Activated T-helper 1 cell treated with anti-CD3 and anti-CD28 coated beads, Interleukin-12 subunit alpha, Interleukin-12 subunit beta, Interleukin-2, Interleukin-4 antibody, amounts not matched to agents 30 ng/mL and 10 ng/mL and 1 ng/mL, durations not matched to agents 14 hours and 24 hours and 36 hours (primary cell): ENCODE measurements at regions of chr1 and their contacts with region 1.

Region 1: GRCh38 chr1:26771643-26772321 is 16.0 kb upstream of the PIGV start:
- DNase-seq: no peak
- H3K4me3 Mint-ChIP-seq: no peak overlapping the region
- H3K27ac Mint-ChIP-seq: peak overlapping the region; percentile 64
- H3K4me1 Mint-ChIP-seq: peaks cover 40% of the 10 kb centered on the region
- H3K27me3 Mint-ChIP-seq: no peaks in the 10 kb centered on the region

Region 2: DNA sequence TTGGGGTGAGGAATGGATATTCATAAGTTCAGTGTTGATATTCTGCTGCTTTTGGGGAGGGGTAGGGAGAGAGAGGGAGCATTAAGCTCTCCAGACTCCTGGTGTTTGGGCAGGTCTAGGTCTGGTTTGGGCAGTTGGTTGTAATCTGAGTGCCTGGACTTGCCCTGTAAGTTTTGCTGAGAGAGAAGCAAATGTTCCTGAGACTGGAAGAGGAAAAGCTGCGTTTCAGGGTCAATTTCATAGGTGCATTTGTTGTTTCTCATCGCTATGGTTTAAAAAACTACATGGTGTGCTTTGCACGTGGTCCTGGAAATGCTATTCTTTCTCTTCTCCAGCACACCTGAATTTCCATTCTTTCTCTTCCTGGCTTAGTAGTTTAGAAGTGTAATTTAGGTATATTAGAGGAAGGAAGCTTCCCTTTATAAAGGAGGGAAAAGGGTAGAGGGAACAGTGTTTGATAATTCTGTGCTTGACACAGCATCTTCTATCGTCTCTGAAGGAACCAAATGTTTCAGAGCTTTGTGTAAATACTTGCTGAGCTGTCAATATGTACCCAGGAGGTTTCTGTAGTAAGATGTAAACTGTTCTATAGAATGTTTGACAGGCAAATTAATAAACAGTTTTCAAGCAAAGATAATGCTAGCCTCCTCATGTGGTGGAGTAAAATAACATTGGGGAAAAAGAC is 69.6 kb before region 1 on chr1:
- intact Hi-C with region 1: loop called (anchors 2 kb)
- DNase-seq: no peak
- H3K4me3 Mint-ChIP-seq: no peak overlapping the region
- H3K27ac Mint-ChIP-seq: no peak overlapping the region
- H3K4me1 Mint-ChIP-seq: peaks cover 23% of the 10 kb centered on the region
- H3K27me3 Mint-ChIP-seq: no peaks in the 10 kb centered on the region

Region 3: DNA sequence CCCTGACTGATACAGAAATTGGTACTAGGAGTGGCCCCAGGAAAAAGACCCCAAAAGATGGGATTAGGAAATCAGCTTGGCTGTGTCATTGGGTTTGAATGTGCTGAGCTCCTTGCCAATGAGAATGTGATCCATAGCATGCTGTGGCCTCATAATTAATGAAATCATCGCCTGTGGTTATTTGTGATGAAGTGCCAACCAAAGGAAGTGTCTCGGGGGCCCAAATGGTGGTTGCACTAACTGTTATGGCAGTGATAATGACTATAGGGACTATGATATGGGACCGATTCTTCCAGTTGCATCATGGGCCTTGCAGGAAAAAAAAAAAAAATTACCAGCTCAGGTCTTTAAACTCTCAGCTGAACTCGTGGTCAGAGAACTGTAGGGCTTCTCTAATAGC is 39.3 kb after region 1 on chr1:
- intact Hi-C with region 1: no loop called
- DNase-seq: no peak
- H3K4me3 Mint-ChIP-seq: no peak overlapping the region
- H3K27ac Mint-ChIP-seq: no peak overlapping the region
- H3K4me1 Mint-ChIP-seq: peaks cover 28% of the 10 kb centered on the region
- H3K27me3 Mint-ChIP-seq: no peaks in the 10 kb centered on the region